ENCODE measurements at regions of chr13 and their contacts with region 1.

Region 1: DNA sequence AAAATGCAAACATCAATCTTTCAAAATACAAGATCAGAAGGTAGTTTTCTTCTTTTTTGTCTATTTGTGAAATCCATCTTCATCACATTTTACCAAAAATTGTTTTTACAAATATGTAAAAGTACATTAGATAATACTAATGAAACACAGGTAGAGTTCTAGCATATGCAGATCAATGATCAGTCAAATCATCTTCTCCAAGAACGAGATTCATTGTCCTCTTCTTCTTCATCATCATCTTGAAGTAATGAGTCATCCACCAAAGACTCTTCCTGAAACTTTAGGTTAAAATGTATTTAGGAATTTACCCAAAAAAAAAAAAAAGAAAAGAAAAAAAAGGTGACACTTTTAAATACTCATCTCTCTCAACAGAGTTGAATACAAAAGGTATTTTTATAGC is 85.6 kb downstream of the RBM26 start:
- DNase-seq: no peak
- H3K4me3 Mint-ChIP-seq: no peak overlapping the region
- H3K27ac Mint-ChIP-seq: no peak overlapping the region
- H3K4me1 Mint-ChIP-seq: peaks cover 3% of the 10 kb centered on the region
- H3K27me3 Mint-ChIP-seq: no peaks in the 10 kb centered on the region

Region 2: DNA sequence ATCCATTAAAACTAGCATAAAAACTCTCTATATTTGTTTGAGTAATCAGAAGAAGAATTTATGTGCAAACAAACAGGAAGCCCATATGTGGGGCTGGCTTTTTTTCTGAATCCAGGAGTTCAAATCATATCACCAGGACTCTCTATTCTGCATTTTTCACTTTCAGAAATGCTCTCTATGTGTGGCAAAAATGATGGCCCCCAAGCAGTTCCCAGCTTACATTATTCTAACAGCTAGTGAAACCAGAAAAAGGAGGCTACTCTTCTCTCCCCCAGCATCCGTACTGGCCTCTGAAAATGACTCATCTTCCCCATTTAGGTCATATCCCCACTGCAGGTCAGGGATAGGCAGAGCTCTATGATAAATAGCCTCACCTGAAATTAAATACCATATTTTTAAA is 65.3 kb after region 1 on chr13:
- intact Hi-C with region 1: loop called (anchors 5 kb)
- DNase-seq: peak; percentile 68
- H3K4me3 Mint-ChIP-seq: no peak overlapping the region
- H3K27ac Mint-ChIP-seq: peak overlapping the region; percentile 56
- H3K4me1 Mint-ChIP-seq: peaks cover 47% of the 10 kb centered on the region
- H3K27me3 Mint-ChIP-seq: no peaks in the 10 kb centered on the region

Measured in activated CD4-positive, alpha-beta T cell treated with anti-CD3 and anti-CD28 coated beads, Interleukin-2, amount 10 ng/mL, durations not matched to agents 24 days and 14 days (primary cell).